Activated CD8-positive, alpha-beta T cell treated with anti-CD3 and anti-CD28 coated beads, Interleukin-2, amount 10 ng/mL, durations not matched to agents 7 days and 5 days (primary cell): ENCODE measurements at regions of chr1 and their contacts with region 1.

Region 1: DNA sequence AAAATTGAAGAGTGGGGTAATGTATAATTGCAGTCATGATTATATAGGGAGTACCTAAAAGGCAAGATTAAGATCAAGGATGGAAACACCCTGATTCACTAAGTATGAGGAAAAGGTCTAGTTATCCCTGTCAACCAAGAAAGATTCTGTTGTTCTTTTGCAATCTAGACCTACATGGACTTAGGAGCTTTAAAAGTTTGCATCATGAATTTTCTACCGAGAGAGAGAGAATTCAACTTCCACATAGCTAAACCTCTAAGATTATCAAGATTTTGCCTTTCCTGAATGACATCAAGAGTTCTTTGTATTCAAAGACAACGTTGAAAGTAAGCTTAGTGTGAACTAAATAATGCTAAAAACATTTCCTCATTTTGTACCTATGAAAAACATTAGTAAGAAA is 78.8 kb upstream of the RBM34 start:
- DNase-seq: no peak
- ATAC-seq: no peak
- H3K4me3 Mint-ChIP-seq: no peak overlapping the region
- H3K27ac Mint-ChIP-seq: no peak overlapping the region
- H3K4me1 Mint-ChIP-seq: peaks cover 33% of the 10 kb centered on the region
- H3K27me3 Mint-ChIP-seq: no peaks in the 10 kb centered on the region

Region 2: GRCh38 chr1:234925440-234926263 is 314.2 kb before region 1 on chr1:
- CTCF ChIA-PET with region 1: no interaction called
- POLR2A ChIA-PET with region 1: no interaction called
- DNase-seq: no peak
- ATAC-seq: peak; percentile 17
- H3K4me3 Mint-ChIP-seq: peak overlapping the region; percentile 59
- H3K27ac Mint-ChIP-seq: peak overlapping the region; percentile 90
- H3K4me1 Mint-ChIP-seq: peaks cover 61% of the 10 kb centered on the region
- H3K27me3 Mint-ChIP-seq: no peaks in the 10 kb centered on the region

Region 3: DNA sequence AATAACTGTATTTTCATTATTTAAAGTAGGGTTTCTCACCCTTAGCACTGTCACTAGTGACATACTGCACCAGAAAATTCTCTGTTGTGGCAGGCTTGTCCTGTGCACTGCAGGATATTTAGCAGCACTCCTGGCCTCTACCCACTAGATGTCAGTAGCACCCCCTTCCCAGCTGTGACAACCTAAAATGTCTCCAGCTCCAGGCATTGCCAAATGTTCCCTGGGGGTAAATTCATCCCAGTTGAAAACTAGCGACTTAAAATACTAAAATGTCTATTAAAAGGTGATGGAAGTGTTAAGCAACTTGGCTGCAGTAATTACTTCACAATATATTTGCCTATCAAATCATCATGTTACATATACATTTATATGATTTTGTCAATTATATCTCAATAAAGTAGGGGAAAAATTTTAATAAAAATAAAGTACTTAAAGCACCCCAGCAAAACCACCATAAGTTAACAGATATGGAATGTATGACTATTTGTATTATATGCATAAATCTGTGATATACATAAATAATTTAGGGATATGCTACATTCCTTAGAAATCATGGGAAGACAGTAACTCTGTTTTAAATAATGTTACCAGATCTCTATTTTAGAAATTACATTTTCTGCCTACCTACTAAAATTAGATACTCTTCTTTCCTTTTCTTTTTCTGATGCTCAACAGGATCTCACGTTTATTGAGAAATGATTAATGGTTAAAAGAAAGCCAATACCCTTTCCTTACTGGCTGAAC is 13.5 kb after region 1 on chr1:
- CTCF ChIA-PET with region 1: interaction called, 10 read pairs
- POLR2A ChIA-PET with region 1: no interaction called
- DNase-seq: peak; percentile 71
- ATAC-seq: peak; percentile 97
- H3K4me3 Mint-ChIP-seq: no peak overlapping the region
- H3K27ac Mint-ChIP-seq: no peak overlapping the region
- H3K4me1 Mint-ChIP-seq: peaks cover 23% of the 10 kb centered on the region
- H3K27me3 Mint-ChIP-seq: no peaks in the 10 kb centered on the region